PC-9 (cell line): ENCODE measurements at regions of chr20 and their contacts with region 1.

Region 1: DNA sequence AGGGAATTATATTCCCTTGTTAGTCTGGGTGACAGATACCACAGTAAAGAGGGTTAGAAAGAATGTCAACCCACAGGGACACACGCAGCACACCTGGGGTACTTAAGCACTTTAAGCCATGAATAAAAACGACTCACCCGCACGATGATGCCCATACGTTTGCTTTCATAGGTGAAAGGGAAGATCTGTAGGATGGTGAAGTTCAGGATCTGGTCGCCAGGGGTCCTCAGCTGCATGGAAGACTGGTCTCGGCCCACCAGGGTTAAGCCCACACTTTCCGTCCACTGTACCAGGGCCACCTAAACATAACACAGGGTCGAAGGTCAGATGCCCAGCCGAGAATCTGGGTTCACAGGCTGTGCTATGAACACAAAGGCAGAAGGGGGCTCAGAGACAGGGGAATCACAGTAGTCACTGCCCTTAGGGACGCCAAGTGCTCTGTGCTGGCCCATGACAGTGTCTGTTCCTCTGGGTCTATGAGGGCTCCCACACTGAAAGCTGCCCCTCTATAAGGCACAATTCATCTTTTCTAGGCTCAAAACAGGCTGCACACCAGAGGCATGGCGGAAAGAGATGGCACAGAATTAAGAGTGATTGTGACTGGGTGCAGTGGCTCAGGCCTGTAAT is 96.8 kb upstream of the NFATC2 start:
- DNase-seq: peak; percentile 47 to 67
- H3K4me3 ChIP-seq: no peak overlapping the region
- H3K27ac ChIP-seq: no peak overlapping the region
- H3K4me1 ChIP-seq: no peaks in the 10 kb centered on the region
- H3K27me3 ChIP-seq: no peaks in the 10 kb centered on the region
- CTCF ChIP-seq: peak; percentile 98

Region 2: DNA sequence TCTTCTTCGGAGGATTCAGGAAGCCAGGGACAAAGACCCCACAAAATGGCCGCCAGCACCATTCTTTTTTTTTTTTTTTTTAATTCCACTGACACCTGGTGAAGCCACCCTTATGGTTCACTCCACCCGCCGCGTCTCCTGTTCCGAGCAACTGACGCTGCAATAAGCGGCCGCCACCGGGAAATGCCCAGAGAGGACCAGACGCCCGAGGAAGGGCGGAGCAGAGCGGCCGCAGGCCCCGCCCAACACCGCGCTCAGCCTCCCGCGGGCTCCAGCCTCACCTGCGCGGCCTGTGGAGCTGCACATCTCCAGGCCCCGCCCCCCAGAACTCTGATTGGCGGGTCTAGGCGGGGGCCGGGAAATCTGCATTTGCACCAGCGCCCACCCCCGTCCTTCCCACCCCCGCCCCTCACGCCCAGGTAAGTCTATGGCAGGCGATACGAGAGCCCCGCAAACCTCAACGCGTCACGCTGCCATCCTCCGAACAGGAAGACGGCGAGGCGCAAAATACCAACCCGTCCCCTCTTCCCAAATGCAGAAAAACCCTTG is 127.8 kb after region 1 on chr20:
- CTCF ChIA-PET with region 1: no interaction called
- POLR2A ChIA-PET with region 1: no interaction called
- intact Hi-C with region 1: loop called (anchors 5 kb)
- DNase-seq: peak; percentile 78 to 94
- H3K4me3 ChIP-seq: peak overlapping the region; percentile 99
- H3K27ac ChIP-seq: peak overlapping the region; percentile 68
- H3K4me1 ChIP-seq: peaks cover 12% of the 10 kb centered on the region
- H3K27me3 ChIP-seq: no peaks in the 10 kb centered on the region
- CTCF ChIP-seq: no peak

Region 3: GRCh38 chr20:51871867-51872304 is 232.6 kb after region 1 on chr20:
- CTCF ChIA-PET with region 1: no interaction called
- POLR2A ChIA-PET with region 1: no interaction called
- intact Hi-C with region 1: no loop called
- DNase-seq: no peak
- H3K4me3 ChIP-seq: no peak overlapping the region
- H3K27ac ChIP-seq: no peak overlapping the region
- H3K4me1 ChIP-seq: no peaks in the 10 kb centered on the region
- H3K27me3 ChIP-seq: no peaks in the 10 kb centered on the region
- CTCF ChIP-seq: no peak

Region 4: GRCh38 chr20:51966291-51966971 is 327.1 kb after region 1 on chr20:
- CTCF ChIA-PET with region 1: no interaction called
- POLR2A ChIA-PET with region 1: no interaction called
- intact Hi-C with region 1: loop called (anchors 2 kb)
- DNase-seq: peak; percentile 67 to 74
- H3K4me3 ChIP-seq: no peak overlapping the region
- H3K27ac ChIP-seq: no peak overlapping the region
- H3K4me1 ChIP-seq: peaks cover 5% of the 10 kb centered on the region; the same call in 1 of the 2 replicates
- H3K27me3 ChIP-seq: no peaks in the 10 kb centered on the region
- CTCF ChIP-seq: peak; percentile 86

Region 5: GRCh38 chr20:52060794-52061714 is 421.7 kb after region 1 on chr20:
- CTCF ChIA-PET with region 1: no interaction called
- POLR2A ChIA-PET with region 1: no interaction called
- intact Hi-C with region 1: loop called (anchors 1 kb)
- DNase-seq: peak in 1 of 2 experiments; percentile 6
- H3K4me3 ChIP-seq: no peak overlapping the region
- H3K27ac ChIP-seq: no peak overlapping the region
- H3K4me1 ChIP-seq: no peaks in the 10 kb centered on the region
- H3K27me3 ChIP-seq: no peaks in the 10 kb centered on the region
- CTCF ChIP-seq: peak; percentile 51

Region 6: GRCh38 chr20:52083627-52084232 is 444.4 kb after region 1 on chr20:
- CTCF ChIA-PET with region 1: no interaction called
- POLR2A ChIA-PET with region 1: no interaction called
- intact Hi-C with region 1: loop called (anchors 1 kb)
- DNase-seq: peak; percentile 34 to 48
- H3K4me3 ChIP-seq: no peak overlapping the region
- H3K27ac ChIP-seq: peak overlapping the region; percentile 33; the same call in 1 of the 2 replicates
- H3K4me1 ChIP-seq: peaks cover 13% of the 10 kb centered on the region
- H3K27me3 ChIP-seq: no peaks in the 10 kb centered on the region
- CTCF ChIP-seq: peak; percentile 82

Region 7: DNA sequence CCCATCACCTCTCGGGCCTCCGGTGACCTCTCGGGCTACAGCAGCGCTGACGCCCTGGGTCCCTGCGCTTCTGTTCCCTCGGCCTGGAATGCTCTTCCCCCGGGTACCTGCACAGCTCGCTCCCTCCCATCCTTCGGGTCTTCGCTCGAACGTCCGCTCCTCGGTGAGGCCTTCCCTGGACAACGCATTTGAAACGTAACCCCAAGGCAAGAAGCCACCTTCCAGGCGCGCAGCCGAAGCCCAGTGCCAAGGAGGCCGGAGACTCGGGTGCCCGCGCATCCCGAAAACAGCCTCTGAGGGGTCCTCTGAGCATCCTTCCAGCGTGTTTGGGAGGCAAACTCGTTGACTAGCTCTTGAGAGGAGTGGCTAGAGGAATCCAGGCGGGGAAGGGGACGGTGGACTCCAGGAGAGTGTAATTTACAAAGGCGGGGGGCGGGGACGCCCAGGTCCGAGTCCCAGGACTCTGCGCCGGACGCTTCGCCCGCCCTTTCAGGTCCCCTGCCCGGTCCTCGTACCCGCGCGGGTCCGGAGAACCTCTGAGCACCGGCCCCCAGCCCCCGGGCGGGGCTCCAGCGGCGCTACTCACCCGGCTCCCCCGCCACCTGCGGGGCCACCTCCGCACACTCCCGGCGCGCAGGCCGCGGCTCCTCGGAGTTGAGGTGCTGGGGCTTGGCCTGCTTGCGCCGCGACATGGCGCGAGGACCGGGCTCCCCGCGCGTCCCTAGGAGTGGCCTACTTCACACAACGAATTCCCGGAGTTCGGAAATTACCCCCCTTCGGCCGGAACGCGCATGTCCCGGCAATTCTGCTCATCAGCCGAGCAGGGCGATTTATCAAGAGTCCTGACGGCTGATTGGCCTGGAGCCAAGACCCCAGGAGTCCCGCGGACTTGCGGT is 465.5 kb after region 1 on chr20:
- CTCF ChIA-PET with region 1: interaction called, 25 read pairs
- POLR2A ChIA-PET with region 1: no interaction called
- intact Hi-C with region 1: no loop called
- DNase-seq: peak; percentile 62 to 65
- H3K4me3 ChIP-seq: peak overlapping the region; percentile 81
- H3K27ac ChIP-seq: peak overlapping the region; percentile 71
- H3K4me1 ChIP-seq: peaks cover 19% of the 10 kb centered on the region
- H3K27me3 ChIP-seq: no peaks in the 10 kb centered on the region
- CTCF ChIP-seq: no peak

Region 8: GRCh38 chr20:52150440-52151258 is 511.3 kb after region 1 on chr20:
- CTCF ChIA-PET with region 1: no interaction called
- POLR2A ChIA-PET with region 1: no interaction called
- intact Hi-C with region 1: loop called (anchors 2 kb)
- DNase-seq: peak in 1 of 2 experiments; percentile 9
- H3K4me3 ChIP-seq: no peak overlapping the region
- H3K27ac ChIP-seq: no peak overlapping the region
- H3K4me1 ChIP-seq: no peaks in the 10 kb centered on the region
- H3K27me3 ChIP-seq: no peaks in the 10 kb centered on the region
- CTCF ChIP-seq: peak; percentile 90